T-cell (primary cell): ENCODE measurements at regions of chr3 and their contacts with region 1.

Region 1: GRCh38 chr3:11236595-11237461 is 35.4 kb upstream of the ATG7 start:
- DNase-seq: peak; percentile 28 to 83 (median 71)
- ATAC-seq: peak; percentile 40 to 70 (median 58)
- H3K4me3 ChIP-seq: no peak overlapping the region
- H3K4me3 Mint-ChIP-seq: no peak overlapping the region
- H3K27ac ChIP-seq: no peak overlapping the region
- H3K27ac Mint-ChIP-seq: no peak overlapping the region
- H3K4me1 ChIP-seq: no peaks in the 10 kb centered on the region
- H3K4me1 Mint-ChIP-seq: peaks cover 0 to 8% (median 0%) of the 10 kb centered on the region in 3 donors
- H3K27me3 ChIP-seq: peaks cover 0 to 7% of the 10 kb centered on the region in 2 experiments
- H3K27me3 Mint-ChIP-seq: peaks cover 11 to 21% of the 10 kb centered on the region in 2 donors

Region 2: GRCh38 chr3:11140054-11140712 is 96.6 kb before region 1 on chr3:
- CTCF ChIA-PET with region 1: no interaction called
- POLR2A ChIA-PET with region 1: no interaction called
- DNase-seq: peak in 1 of 35 experiments; percentile 33
- ATAC-seq: peak in 3 of 4 experiments; percentile 31 to 42 (median 41)
- H3K4me3 ChIP-seq: no peak overlapping the region
- H3K4me3 Mint-ChIP-seq: no peak overlapping the region
- H3K27ac ChIP-seq: no peak overlapping the region
- H3K27ac Mint-ChIP-seq: peak overlapping the region in 1 of 2 donors; percentile 16
- H3K4me1 ChIP-seq: no peaks in the 10 kb centered on the region
- H3K4me1 Mint-ChIP-seq: peaks cover 6 to 8% (median 8%) of the 10 kb centered on the region in 3 donors
- H3K27me3 ChIP-seq: peaks cover 0 to 16% of the 10 kb centered on the region in 2 experiments
- H3K27me3 Mint-ChIP-seq: peaks cover 16 to 17% of the 10 kb centered on the region in 2 donors

Region 3: GRCh38 chr3:11250902-11251813 is 14.3 kb after region 1 on chr3:
- CTCF ChIA-PET with region 1: interaction called in 1 of 2 experiments, 11 read pairs
- POLR2A ChIA-PET with region 1: no interaction called
- DNase-seq: peak in 1 of 35 experiments; percentile 14
- ATAC-seq: peak; percentile 53 to 88 (median 76)
- H3K4me3 ChIP-seq: no peak overlapping the region
- H3K4me3 Mint-ChIP-seq: peak overlapping the region in 2 of 3 donors; percentile 10 to 25
- H3K27ac ChIP-seq: peak overlapping the region; percentile 16
- H3K27ac Mint-ChIP-seq: peak overlapping the region; percentile 86 to 88
- H3K4me1 ChIP-seq: peaks cover 0 to 7% of the 10 kb centered on the region in 2 experiments
- H3K4me1 Mint-ChIP-seq: peaks cover 14 to 19% (median 16%) of the 10 kb centered on the region in 3 donors
- H3K27me3 ChIP-seq: peaks cover 0 to 1% of the 10 kb centered on the region in 2 experiments
- H3K27me3 Mint-ChIP-seq: peaks cover 2 to 14% of the 10 kb centered on the region in 2 donors

Region 4: DNA sequence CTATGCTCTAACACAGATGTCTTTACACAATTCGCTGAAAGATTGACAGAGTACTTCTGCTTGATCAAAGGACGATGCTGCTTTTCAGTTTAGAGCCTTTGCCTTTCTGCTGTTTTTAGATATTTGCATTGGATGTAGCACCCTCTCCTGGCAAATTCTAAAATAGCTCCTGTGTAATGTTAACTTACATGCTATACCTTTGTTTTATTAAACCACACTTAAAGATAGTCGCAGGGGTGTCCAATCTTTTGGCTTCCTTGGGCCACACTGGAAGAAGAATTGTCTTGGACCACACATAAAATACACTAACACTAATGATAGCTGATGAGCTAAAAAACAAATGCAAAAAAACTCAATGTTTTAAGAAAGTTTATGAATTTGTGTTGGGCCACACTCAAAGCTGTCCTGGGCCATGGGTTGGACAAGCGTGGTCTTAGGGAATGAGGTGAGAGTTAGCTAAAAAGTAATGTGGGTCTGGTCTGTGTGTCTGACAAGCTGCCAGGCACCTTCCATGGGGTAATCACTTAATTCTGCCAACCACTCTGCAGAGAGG is 98.3 kb after region 1 on chr3:
- CTCF ChIA-PET with region 1: interaction called, 27 to 34 read pairs
- POLR2A ChIA-PET with region 1: no interaction called
- DNase-seq: peak in 10 of 35 experiments; percentile 4 to 70 (median 10)
- ATAC-seq: peak; percentile 45 to 72 (median 68)
- H3K4me3 ChIP-seq: no peak overlapping the region
- H3K4me3 Mint-ChIP-seq: no peak overlapping the region
- H3K27ac ChIP-seq: no peak overlapping the region
- H3K27ac Mint-ChIP-seq: no peak overlapping the region
- H3K4me1 ChIP-seq: no peaks in the 10 kb centered on the region
- H3K4me1 Mint-ChIP-seq: peaks cover 0 to 2% (median 0%) of the 10 kb centered on the region in 3 donors
- H3K27me3 ChIP-seq: no peaks in the 10 kb centered on the region
- H3K27me3 Mint-ChIP-seq: no peaks in the 10 kb centered on the region

Region 5: GRCh38 chr3:11651900-11652299 is 415.1 kb after region 1 on chr3:
- CTCF ChIA-PET with region 1: interaction called in 1 of 2 experiments, 12 read pairs
- POLR2A ChIA-PET with region 1: no interaction called
- DNase-seq: peak in 1 of 35 experiments; percentile 71
- ATAC-seq: peak in 1 of 4 experiments; percentile 50
- H3K4me3 ChIP-seq: no peak overlapping the region
- H3K4me3 Mint-ChIP-seq: no peak overlapping the region
- H3K27ac ChIP-seq: no peak overlapping the region
- H3K27ac Mint-ChIP-seq: no peak overlapping the region
- H3K4me1 ChIP-seq: peaks cover 0 to 4% of the 10 kb centered on the region in 2 experiments
- H3K4me1 Mint-ChIP-seq: peaks cover 3 to 10% (median 9%) of the 10 kb centered on the region in 3 donors
- H3K27me3 ChIP-seq: no peaks in the 10 kb centered on the region
- H3K27me3 Mint-ChIP-seq: no peaks in the 10 kb centered on the region